Prostate gland (tissue), 2 donors: ENCODE measurements at regions of chr4 and their contacts with region 1.

Region 1: DNA sequence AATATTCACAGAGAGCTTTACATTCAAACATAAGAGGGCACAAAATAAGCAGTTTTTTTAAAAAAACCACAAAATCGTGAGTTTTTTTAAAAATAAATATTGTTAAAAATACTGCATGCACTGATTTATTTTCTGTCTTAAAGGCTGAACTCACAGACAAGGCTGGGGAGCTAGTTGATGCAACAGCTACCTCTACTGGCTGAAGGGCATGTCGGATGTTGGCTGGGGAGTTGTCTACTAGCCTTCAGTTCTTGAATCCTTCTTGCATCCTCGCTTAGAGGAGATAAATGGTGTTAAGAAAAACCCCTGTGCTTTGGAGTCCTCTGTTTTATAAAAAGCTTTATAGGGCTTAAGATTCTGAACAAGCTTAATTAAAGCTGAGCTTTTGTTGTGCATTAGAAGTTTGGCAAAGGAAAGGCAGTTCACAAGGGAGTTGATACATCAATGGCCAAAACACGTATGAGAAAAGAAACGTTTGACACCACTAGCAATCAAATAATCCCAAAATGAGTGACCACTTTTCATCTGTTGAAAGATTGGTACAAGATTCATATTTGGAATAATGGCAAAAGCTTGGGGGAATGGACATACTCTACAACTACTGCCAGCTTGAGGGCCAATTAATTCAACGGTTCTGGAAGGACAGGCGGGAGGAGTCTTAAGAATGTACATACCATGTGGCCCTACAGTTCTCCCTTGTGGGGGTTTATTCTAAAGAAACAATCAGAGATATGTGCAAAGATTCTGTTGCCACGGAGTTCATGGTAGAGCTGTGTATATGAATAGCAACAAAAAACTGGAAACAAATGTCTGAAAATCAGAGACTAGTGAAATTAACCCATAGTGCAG is 94.7 kb downstream of the SEL1L3 start:
- DNase-seq: peak; percentile 50
- H3K4me3 ChIP-seq: no peak overlapping the region
- H3K27ac ChIP-seq: no peak overlapping the region
- H3K4me1 ChIP-seq: no peaks in the 10 kb centered on the region
- H3K27me3 ChIP-seq: no peaks in the 10 kb centered on the region
- CTCF ChIP-seq: peak; percentile 57 to 76 (median 66)
- POLR2A ChIP-seq: no peak

Region 2: DNA sequence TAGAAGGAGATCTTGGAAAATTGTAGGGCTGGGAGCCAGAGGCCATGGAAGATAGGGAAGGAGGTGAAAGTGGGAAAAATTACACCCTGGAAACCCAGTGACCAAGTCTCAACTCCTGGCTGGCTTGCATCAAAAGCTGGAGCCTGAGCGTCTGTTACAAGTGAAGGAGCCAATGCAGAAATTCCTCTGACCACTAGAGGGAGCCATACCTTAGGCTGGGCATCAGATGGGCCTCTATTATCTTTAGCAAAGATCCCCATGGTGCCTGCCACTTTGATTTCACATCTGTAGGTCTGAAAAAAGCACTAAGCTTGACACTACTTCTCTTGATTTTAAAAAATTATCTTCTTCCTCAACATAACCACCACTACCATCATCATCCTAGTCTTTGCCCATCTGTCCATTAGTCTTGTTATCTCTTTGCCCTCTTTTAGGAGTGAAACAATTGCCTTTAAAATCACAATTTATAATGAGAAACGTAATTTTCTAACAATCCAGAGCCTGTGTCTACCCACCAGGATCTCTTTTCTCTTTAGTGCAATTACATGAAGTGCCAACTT is 328.1 kb before region 1 on chr4:
- intact Hi-C with region 1: loop called (anchors 2 kb)
- DNase-seq: peak; percentile 64
- H3K4me3 ChIP-seq: no peak overlapping the region
- H3K27ac ChIP-seq: no peak overlapping the region
- H3K4me1 ChIP-seq: no peaks in the 10 kb centered on the region
- H3K27me3 ChIP-seq: no peaks in the 10 kb centered on the region
- CTCF ChIP-seq: peak; percentile 65 to 79 (median 72)
- POLR2A ChIP-seq: no peak

Region 3: GRCh38 chr4:26931966-26932365 is 1163.9 kb after region 1 on chr4:
- intact Hi-C with region 1: no loop called
- DNase-seq: no peak
- H3K4me3 ChIP-seq: no peak overlapping the region
- H3K27ac ChIP-seq: no peak overlapping the region
- H3K4me1 ChIP-seq: no peaks in the 10 kb centered on the region
- H3K27me3 ChIP-seq: no peaks in the 10 kb centered on the region
- CTCF ChIP-seq: no peak
- POLR2A ChIP-seq: no peak